ENCODE measurements at regions of chr2 and their contacts with region 1.

Region 1: DNA sequence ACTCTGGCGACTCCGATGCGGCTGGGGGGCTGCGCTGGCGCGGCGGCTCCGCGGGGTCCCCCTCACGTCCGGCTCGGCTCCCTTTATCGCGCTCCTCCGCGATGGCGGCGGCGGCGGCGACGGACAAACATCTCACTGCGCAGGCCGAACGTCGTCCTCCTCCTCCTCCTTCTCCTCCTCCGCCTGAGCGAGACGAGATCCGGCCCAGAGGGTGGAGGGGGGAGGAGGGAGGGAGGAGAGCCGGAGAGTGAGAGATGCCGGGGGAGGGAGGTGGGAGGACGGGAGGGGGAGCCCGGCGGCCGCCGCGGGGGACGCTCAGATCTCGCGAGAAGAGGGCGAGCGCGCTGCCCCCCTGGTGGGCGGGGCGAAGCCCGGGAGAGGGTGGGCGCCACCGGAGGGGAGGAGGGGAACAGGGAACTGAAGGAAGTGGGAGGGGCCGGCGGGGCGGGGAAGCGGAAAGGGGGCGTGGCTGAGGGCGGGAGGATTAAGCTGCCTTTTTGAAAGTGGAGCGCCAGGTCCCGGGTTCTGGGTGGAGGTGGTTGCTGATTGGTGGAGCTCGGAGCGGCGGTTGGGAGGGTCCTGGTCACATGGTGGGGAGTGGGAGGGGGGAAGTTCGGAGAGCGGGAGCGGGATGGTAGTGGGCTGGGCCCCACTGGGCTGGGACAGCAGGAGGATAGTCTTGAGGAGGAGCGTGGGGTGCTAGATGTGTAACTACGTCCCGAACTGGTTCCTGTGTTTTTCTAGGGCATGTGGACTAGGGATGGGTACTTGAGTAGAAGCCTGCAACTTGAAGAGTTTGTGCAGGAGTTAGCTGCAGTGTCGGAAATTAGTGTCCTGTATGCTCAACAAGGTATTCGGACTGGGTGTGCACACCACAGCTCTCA is at the start of gene CUL3:
- DNase-seq: peak; percentile 99
- H3K4me3 ChIP-seq: peak within 1 kb of the TSS; percentile 78 to 87 (median 80)
- H3K27ac ChIP-seq: peak within 1 kb of the TSS; percentile 92 to 95 (median 92)
- H3K4me1 ChIP-seq: peaks cover 0 to 42% (median 32%) of the 10 kb centered on the region in 4 donors
- H3K27me3 ChIP-seq: no peaks in the 10 kb centered on the region
- CTCF ChIP-seq: no peak
- EP300 ChIP-seq: no peak
- POLR2A ChIP-seq: peak; percentile 69 to 74
- total RNA-seq, gene CUL3: 59.3 to 65.8 (median 63.6) TPM

Region 2: DNA sequence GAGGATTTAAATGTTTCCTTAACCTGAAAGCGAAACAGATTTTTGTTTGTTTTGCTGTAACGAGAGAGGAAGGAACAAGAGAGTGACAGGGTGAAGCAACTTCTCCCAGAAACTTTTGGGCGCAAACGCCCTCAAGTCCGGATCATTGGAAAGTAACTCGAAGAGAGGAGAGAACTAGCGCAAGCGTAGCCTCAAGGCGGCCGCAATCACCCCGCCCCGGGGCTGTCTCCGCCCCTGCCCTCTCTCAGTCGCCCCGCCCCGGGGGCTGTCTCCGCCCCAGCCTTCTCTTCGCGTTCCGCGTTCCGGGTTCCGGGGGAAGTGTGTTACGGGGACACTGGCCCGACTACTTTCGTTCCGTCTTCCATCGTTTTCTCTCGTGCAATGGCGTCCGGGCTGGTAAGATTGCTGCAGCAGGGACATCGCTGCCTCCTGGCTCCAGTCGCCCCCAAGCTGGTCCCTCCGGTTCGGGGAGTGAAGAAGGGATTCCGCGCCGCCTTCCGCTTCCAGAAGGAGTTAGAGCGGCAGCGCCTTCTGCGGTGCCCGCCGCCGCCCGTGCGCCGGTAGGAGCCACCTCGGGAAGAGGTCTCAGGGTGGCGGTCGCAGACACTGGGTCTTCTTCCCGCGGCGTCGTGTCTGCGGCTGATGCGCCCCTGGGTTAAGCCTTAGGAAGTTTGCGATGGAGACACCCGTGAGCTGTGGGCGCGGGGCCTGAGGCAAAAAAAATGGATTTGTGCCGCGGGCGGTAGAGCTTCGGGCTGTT is 628.2 kb before region 1 on chr2 and contains the start of gene MRPL44:
- intact Hi-C with region 1: loop called (anchors 10 kb)
- DNase-seq: peak; percentile 98
- H3K4me3 ChIP-seq: peak within 1 kb of the TSS; percentile 83 to 94 (median 84)
- H3K27ac ChIP-seq: peak within 1 kb of the TSS; percentile 83 to 89 (median 86)
- H3K4me1 ChIP-seq: peaks cover 0 to 53% (median 47%) of the 10 kb centered on the region in 4 donors
- H3K27me3 ChIP-seq: no peaks in the 10 kb centered on the region
- CTCF ChIP-seq: no peak
- EP300 ChIP-seq: peak in 1 of 4 donors; percentile 47
- POLR2A ChIP-seq: peak; percentile 30 to 38
- total RNA-seq, gene MRPL44: 14.9 to 22.8 (median 20.4) TPM

Region 3: DNA sequence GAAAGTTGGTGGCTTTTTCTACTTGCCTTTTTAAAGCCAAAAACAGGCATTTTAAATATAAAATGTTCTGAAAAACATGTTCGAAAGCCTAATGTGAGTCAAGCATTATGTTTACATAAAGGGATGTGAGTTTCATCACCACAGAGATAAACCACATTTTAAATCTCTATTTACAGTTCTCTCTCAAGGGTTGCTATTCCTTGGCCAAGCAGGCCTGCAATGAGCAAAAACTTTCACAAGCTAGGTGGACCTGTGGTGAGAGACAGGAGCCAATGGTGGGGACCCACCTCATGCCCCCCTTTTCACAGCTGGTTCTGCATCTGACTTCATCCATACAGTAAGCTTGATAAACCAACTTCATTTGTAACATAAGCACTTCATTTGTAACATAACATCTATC is 65.4 kb before region 1 on chr2:
- intact Hi-C with region 1: loop called (anchors 5 kb)
- DNase-seq: no peak
- H3K4me3 ChIP-seq: no peak overlapping the region
- H3K27ac ChIP-seq: peak overlapping the region in 3 of 4 donors; percentile 6 to 35 (median 30)
- H3K4me1 ChIP-seq: peaks cover 0 to 66% (median 49%) of the 10 kb centered on the region in 4 donors
- H3K27me3 ChIP-seq: no peaks in the 10 kb centered on the region
- CTCF ChIP-seq: no peak
- EP300 ChIP-seq: no peak
- POLR2A ChIP-seq: no peak

Measured in sigmoid colon (tissue), 7 donors.